A673 (cell line): ENCODE measurements at regions of chr3 and their contacts with region 1.

Region 1: DNA sequence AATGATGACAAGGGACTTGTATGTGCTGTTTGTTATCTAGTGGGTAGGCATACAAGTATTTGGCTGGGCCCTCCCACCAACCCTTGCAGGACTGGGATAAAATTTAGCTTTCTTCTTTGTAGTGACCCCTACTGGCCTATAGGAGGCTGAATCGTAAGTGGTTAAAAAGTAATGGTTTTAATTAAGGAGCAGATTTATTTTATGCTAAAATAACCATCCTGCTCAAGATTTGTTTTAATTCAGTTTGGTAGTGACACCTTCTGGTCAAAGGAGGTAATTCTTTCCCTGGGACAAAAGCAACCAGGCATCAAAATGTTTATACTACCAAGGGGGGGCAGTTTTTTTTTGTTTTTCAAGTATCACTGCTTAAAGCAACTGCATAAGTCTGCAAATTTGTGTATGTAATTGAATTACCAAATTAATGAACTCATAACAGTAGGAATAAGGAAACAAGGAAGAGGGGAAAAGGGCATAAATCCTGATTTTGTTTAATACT is 70.7 kb downstream of the TOP2B start:
- DNase-seq: peak; percentile 83
- H3K4me3 ChIP-seq: no peak overlapping the region
- H3K27ac ChIP-seq: no peak overlapping the region
- H3K4me1 ChIP-seq: peaks cover 14% of the 10 kb centered on the region
- H3K27me3 ChIP-seq: no peaks in the 10 kb centered on the region
- CTCF ChIP-seq: peak; percentile 85; the same call in 1 of the 2 replicates

Region 2: DNA sequence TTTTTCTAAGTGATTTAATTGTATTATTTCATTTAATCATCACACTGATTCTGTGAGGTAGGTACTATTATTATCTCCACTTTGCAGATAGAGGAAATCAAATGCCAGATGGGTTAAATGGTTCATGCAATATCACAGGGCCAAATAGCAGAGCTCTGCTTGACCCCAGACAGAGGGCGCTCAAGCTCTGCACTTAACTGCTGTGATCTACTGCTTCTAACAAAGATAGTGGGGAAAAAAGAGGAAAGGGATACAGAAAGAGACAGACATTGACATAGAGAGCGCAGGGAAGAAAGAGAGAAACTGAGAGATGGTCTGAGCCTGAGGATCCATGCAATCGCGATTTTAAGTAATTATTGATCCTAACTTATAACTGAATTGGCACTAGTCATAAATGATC is 820.3 kb before region 1 on chr3:
- CTCF ChIA-PET with region 1: interaction called, 3 read pairs
- POLR2A ChIA-PET with region 1: no interaction called
- intact Hi-C with region 1: loop called (anchors 2 kb)
- DNase-seq: peak; percentile 66
- H3K4me3 ChIP-seq: no peak overlapping the region
- H3K27ac ChIP-seq: no peak overlapping the region
- H3K4me1 ChIP-seq: no peaks in the 10 kb centered on the region
- H3K27me3 ChIP-seq: peaks cover 15% of the 10 kb centered on the region
- CTCF ChIP-seq: peak; percentile 86

Region 3: DNA sequence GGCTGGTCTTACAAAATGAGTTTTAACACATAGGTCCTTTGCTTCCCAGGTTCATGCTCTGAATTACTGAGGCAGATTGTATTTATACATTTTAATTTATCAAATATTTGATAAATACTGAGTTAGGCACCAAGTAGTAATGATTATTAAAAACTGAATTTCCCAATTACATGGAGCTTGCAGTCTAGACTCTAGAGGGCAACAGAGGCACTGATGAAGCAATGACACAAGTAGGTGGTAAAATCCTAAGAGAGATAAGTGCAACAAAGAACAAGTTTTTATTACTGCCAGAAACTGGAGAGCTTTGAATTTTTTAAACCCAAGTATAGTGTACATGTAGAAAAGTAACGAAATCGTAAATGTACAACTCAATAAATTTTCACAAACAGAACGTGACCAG is 572.2 kb before region 1 on chr3:
- CTCF ChIA-PET with region 1: no interaction called
- POLR2A ChIA-PET with region 1: no interaction called
- intact Hi-C with region 1: loop called (anchors 5 kb)
- DNase-seq: peak; percentile 36
- H3K4me3 ChIP-seq: no peak overlapping the region
- H3K27ac ChIP-seq: no peak overlapping the region
- H3K4me1 ChIP-seq: no peaks in the 10 kb centered on the region
- H3K27me3 ChIP-seq: no peaks in the 10 kb centered on the region
- CTCF ChIP-seq: peak; percentile 63

Region 4: GRCh38 chr3:25169151-25169550 is 424.9 kb before region 1 on chr3:
- CTCF ChIA-PET with region 1: no interaction called
- POLR2A ChIA-PET with region 1: no interaction called
- intact Hi-C with region 1: loop called (anchors 10 kb)
- DNase-seq: peak; percentile 40
- H3K4me3 ChIP-seq: no peak overlapping the region
- H3K27ac ChIP-seq: no peak overlapping the region
- H3K4me1 ChIP-seq: no peaks in the 10 kb centered on the region
- H3K27me3 ChIP-seq: no peaks in the 10 kb centered on the region
- CTCF ChIP-seq: no peak